K562 (cell line): ENCODE measurements at regions of chr16 and their contacts with region 1.

Region 1: GRCh38 chr16:10743610-10744393 is at the start of gene NUBP1:
- DNase-seq: peak; percentile 96 to 98 (median 97)
- ATAC-seq: peak; percentile 96
- H3K4me3 ChIP-seq: peak within 1 kb of the TSS; percentile 66
- H3K27ac ChIP-seq: peak within 1 kb of the TSS; percentile 99
- H3K4me1 ChIP-seq: peaks cover 24 to 26% of the 10 kb centered on the region in 2 experiments
- H3K27me3 ChIP-seq: no peaks in the 10 kb centered on the region
- CTCF ChIP-seq: no peak
- EP300 ChIP-seq: no peak
- POLR2A ChIP-seq: peak; percentile 98
- RAD21 ChIP-seq: no peak
- polyA plus RNA-seq, gene NUBP1: 17.2 to 20.9 TPM

Region 2: GRCh38 chr16:10250137-10250850 is 493.5 kb before region 1 on chr16:
- CTCF ChIA-PET with region 1: no interaction called
- POLR2A ChIA-PET with region 1: no interaction called
- in situ Hi-C with region 1: loop called (anchors 5 kb)
- intact Hi-C with region 1: loop called (anchors 10 kb)
- DNase-seq: no peak
- ATAC-seq: no peak
- H3K4me3 ChIP-seq: no peak overlapping the region
- H3K27ac ChIP-seq: no peak overlapping the region
- H3K4me1 ChIP-seq: peaks cover 0 to 6% of the 10 kb centered on the region in 2 experiments; a peak in 2 of 5 replicates
- H3K27me3 ChIP-seq: peaks cover 20 to 35% of the 10 kb centered on the region in 2 experiments
- CTCF ChIP-seq: no peak
- EP300 ChIP-seq: no peak
- POLR2A ChIP-seq: no peak
- RAD21 ChIP-seq: no peak

Region 3: DNA sequence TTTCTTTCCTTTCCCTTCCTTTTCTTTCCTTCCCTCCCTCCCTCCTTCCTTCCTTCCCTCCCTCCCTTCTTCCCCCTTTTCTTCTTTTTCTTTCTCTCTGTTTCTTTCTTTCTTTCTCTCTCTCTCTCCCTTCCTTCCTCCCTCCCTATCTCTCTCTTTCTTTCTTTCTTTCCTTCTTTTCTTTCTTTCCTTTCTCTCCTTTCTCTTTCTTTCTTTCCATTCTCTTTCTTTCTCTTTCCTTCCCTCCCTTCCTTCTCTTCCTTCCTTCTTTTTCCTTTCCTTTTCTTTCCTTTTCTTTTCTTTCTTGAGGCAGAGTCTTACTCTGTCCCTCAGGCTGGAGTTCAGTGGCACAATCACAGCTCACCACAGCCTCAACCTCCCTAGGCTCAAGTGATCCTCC is 167.5 kb after region 1 on chr16:
- CTCF ChIA-PET with region 1: no interaction called
- POLR2A ChIA-PET with region 1: no interaction called
- in situ Hi-C with region 1: loop called (anchors 5 kb)
- intact Hi-C with region 1: loop called (anchors 5 kb)
- DNase-seq: no peak
- ATAC-seq: no peak
- H3K4me3 ChIP-seq: no peak overlapping the region
- H3K27ac ChIP-seq: no peak overlapping the region
- H3K4me1 ChIP-seq: peaks cover 0 to 17% of the 10 kb centered on the region in 2 experiments; a peak in 2 of 5 replicates
- H3K27me3 ChIP-seq: peaks cover 42 to 70% of the 10 kb centered on the region in 2 experiments
- CTCF ChIP-seq: no peak
- EP300 ChIP-seq: no peak
- POLR2A ChIP-seq: no peak
- RAD21 ChIP-seq: no peak